ENCODE measurements at regions of chr6 and their contacts with region 1.

Region 1: GRCh38 chr6:41072676-41073623 is at the start of gene NFYA:
- DNase-seq: peak; percentile 100
- H3K4me3 Mint-ChIP-seq: peak within 1 kb of the TSS; percentile 93
- H3K27ac Mint-ChIP-seq: peak within 1 kb of the TSS; percentile 98
- H3K4me1 Mint-ChIP-seq: peaks cover 50% of the 10 kb centered on the region
- H3K27me3 Mint-ChIP-seq: no peaks in the 10 kb centered on the region
- total RNA-seq, gene NFYA: 38.0 to 38.7 TPM

Region 2: DNA sequence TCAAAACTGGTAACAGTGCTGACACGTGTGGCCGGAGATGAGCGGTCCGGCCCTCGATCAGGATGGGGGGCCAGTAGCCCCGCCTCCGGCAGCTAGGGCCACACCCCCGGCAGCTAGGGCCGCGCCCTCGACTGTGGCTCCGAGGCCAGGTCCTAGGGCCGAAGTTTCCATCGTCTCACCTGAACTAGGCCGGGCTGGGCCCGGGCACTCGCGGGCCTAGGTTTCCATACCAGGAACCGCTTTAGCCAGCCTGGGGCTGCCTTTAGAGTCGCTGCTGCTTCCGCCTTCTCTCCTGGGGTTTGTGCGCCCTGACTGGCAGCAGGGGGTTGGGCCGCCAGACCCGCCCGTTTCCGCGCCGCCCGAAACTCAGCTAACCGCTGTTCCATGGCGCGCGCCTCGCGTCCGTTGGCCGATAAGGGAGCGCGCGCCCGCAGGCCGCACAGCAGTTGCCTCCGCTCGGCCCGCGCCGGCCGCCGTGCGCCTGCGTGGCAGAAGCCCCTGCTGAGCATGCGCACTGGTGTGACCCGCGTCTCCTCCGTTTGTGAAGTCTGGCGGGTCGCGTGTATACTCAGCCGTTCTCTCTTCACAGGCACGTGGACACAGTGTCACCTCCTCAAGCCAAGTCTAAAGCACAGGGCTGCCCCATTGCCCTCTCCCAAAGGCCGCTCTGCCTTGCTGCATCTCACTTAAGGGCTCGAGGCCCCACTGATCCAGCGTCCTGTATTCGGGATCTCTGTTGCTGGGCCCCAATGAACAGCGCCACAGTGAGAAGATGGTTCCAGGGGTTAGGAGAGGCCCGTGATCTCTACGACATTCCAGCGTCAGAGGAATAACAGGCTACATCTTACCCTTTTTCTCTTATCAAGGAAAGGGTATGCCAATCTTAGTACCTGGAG is 1958.0 kb before region 1 on chr6 and contains the start of gene SAYSD1:
- CTCF ChIA-PET with region 1: no interaction called
- intact Hi-C with region 1: loop called (anchors 5 kb)
- DNase-seq: peak; percentile 94
- H3K4me3 Mint-ChIP-seq: peak within 1 kb of the TSS; percentile 93
- H3K27ac Mint-ChIP-seq: peak within 1 kb of the TSS; percentile 95
- H3K4me1 Mint-ChIP-seq: peaks cover 56% of the 10 kb centered on the region
- H3K27me3 Mint-ChIP-seq: no peaks in the 10 kb centered on the region
- total RNA-seq, gene SAYSD1: 13.7 to 13.8 TPM

Region 3: GRCh38 chr6:41100871-41101287 is 27.9 kb after region 1 on chr6:
- CTCF ChIA-PET with region 1: no interaction called
- intact Hi-C with region 1: loop called (anchors 2 kb)
- DNase-seq: no peak
- H3K4me3 Mint-ChIP-seq: no peak overlapping the region
- H3K27ac Mint-ChIP-seq: no peak overlapping the region
- H3K4me1 Mint-ChIP-seq: peaks cover 2% of the 10 kb centered on the region
- H3K27me3 Mint-ChIP-seq: no peaks in the 10 kb centered on the region

Region 4: DNA sequence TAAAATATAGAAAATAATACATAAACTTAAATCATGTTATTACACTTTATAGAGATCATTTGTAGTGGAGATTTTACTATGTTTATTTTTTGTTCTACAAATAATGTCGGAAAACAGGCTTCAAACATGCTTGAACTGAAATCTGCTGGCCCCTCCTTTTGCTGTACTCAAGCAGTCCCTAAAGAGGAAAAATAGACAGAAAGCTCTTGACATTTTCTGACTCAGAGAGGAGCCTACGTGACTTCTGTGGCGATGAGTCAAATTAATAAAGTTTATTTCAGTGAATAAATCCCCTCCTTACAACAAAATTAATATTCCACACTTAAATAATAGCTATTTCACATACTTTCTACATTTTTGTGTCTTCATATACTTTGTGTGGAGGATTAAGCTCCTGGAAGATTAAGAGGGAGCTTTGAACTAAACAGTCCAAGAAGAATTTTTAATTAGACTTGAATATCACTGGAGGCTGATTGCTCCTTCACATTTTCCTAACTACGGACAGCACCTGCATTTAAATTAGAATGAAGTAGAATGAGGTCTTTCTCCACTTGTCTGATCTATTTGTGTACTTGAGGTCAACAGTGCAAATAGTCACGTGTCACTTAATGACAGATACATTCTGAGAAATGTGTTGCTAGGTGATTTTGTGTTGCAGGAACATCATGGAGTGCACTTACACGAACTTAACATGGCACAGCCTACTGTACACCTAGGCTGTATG is 215.2 kb after region 1 on chr6:
- CTCF ChIA-PET with region 1: no interaction called
- intact Hi-C with region 1: loop called (anchors 2 kb)
- DNase-seq: peak; percentile 24
- H3K4me3 Mint-ChIP-seq: no peak overlapping the region
- H3K27ac Mint-ChIP-seq: peak overlapping the region; percentile 86
- H3K4me1 Mint-ChIP-seq: peaks cover 23% of the 10 kb centered on the region
- H3K27me3 Mint-ChIP-seq: no peaks in the 10 kb centered on the region

Region 5: GRCh38 chr6:41334482-41335040 is 261.6 kb after region 1 on chr6:
- CTCF ChIA-PET with region 1: no interaction called
- intact Hi-C with region 1: loop called (anchors 1 kb)
- DNase-seq: peak; percentile 30
- H3K4me3 Mint-ChIP-seq: no peak overlapping the region
- H3K27ac Mint-ChIP-seq: peak overlapping the region; percentile 78
- H3K4me1 Mint-ChIP-seq: peaks cover 46% of the 10 kb centered on the region
- H3K27me3 Mint-ChIP-seq: no peaks in the 10 kb centered on the region

Region 6: DNA sequence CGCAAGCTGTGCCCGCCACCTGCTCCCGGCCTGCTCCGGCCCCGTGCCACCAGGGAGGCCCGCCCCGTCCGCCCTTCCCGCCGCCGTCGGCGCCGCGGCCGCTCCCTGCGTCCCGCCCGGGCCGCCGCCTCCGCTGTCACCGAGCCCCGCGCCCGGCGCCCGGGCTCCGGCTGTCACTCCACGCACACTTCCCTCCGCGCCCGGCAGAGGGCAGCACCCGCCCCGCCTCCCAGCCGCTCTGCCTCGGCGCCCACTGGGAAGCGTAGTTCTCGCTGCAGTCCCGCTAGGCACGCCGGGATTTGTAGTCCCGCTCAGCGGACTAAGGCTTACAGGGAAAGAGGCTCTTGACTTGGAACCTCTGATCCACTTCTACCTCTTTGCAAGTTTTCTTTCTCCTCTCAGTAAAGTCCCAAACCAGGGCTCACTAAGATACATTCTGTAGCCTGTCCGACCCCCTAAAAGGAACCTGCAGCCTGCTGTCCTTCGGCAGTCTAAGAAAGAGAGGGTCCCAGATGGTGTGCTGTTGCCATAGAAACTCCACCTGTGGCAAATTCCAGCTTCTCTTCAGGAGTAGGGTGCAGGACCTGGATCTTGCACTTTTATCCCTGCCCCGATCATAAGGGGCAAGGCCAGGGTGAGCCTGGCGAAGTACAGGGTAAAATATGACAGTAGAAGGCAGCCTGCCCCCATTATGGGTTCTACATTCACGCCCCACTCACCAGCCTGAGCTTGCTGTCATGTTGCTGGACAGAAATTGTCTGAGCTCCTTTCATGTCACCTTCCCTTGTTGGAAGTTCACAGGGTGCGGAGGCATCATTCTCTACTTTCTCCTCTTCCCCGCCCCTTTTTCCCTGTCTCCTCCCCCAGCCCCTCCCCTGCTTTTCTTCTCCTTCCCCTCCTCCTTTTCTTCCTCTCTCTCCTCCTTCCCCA is 662.7 kb after region 1 on chr6 and contains the start of gene TFEB:
- CTCF ChIA-PET with region 1: no interaction called
- intact Hi-C with region 1: loop called (anchors 2 kb)
- DNase-seq: peak; percentile 96
- H3K4me3 Mint-ChIP-seq: peak within 1 kb of the TSS; percentile 72
- H3K27ac Mint-ChIP-seq: no peak within 1 kb of the TSS
- H3K4me1 Mint-ChIP-seq: peaks cover 21% of the 10 kb centered on the region
- H3K27me3 Mint-ChIP-seq: no peaks in the 10 kb centered on the region
- total RNA-seq, gene TFEB: 5.7 to 7.9 TPM

Measured in activated naive CD4-positive, alpha-beta T cell treated with anti-CD3 and anti-CD28 coated beads for 36 hours (primary cell).